GM10248 (cell line): ENCODE measurements at regions of chr2 and their contacts with region 1.

Region 1: DNA sequence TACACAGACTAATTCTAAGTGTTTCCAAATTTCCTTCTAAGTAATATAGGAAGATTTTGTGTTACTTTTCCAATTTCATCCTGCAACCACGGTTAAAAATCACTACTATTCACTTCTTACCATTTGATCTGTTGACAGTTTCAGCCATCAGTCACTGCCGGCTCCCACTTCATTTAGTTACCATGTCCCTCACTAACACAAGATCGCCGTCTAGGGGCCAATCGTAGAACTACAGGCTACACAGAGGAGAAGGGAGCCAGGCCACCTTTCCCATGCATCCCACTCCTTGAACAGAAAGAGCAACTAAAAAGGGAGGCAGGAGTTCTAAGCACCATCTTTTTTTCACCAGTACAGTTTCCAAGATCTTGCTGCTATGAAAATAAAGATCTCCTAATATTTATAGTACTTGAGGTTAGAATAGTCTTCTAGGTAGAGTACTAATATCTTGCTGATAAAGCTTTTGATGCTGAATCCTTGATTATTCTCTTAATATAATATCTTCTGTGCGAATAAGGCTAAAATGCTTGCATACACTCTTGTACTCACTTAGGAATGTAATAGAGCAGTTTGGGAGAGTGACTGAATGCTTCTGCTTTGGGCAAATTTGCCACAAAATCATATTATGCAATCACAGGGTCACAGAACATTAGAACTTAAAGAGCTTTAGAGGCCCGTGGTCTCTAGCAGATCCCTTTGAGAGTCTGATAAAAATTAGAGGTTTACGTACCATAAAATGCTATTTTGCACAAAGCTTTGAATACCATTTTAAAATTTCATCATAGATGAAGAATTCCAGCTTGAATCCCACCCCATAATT is 39.5 kb upstream of the CYP1B1 start:
- DNase-seq: peak; percentile 72
- CTCF ChIP-seq: peak; percentile 88

Region 2: DNA sequence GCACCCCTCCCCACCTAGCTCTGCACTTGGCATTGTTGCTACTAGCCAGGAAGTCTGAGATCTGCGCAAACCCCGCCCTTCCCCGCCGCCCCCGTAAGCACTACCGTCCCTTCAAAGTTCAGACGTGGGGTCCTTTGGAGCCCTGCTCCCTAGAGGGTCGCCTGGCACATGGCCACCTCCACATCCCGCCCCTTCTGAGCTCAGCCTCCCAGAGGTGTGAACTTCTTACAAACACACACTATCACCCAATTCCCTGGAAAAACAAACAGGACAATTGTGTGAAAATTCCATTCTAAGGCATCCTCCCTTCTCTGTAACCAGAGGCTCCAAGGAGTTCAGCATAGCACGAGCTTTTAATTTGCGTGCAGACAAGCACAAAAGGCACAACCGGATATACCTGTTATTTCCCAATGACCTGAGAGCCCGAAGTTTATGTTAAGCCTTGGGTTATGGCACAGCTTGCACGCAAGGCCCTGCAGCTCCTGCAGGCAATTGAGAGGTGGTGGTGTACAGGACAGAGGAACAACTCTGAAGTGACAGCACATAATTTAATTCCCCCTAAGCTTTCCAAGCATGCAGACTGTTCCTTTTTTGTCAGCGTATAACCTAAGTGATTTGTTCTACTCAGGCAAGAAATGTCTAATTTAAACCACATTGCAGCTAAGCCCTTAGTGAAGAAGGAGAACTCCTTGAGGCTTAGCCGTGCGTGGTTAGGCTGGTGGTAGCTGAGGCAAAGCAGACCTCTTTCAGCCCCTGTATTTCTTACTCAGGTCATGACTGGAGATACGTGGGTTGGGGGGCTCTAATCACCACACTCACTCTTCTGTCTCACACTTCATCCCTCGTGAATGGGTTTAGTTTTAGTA is 19.2 kb before region 1 on chr2:
- CTCF ChIA-PET with region 1: interaction called, 12 read pairs
- POLR2A ChIA-PET with region 1: no interaction called
- DNase-seq: peak; percentile 45
- CTCF ChIP-seq: no peak

Region 3: GRCh38 chr2:38128653-38129052 is 13.2 kb after region 1 on chr2:
- CTCF ChIA-PET with region 1: interaction called, 18 read pairs
- POLR2A ChIA-PET with region 1: no interaction called
- DNase-seq: peak; percentile 46
- CTCF ChIP-seq: no peak

Region 4: DNA sequence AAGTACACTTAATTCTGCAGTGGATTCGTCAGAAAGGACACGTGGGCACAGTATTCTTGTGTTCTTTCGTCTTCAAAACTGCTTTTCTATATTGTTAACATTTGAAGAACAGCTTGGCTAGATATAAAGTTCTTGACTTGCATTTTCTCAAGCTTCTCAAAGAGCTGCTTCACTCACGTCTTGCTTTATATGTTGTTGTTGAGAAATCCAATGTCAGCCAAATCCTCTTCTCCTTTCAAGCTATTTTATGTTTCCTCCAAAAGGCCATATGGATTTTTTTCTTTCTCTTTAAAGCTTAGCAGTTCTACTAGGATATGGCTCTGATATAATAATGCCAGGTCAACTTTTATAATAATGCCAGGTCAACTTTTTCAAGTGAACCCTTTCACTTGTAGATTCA is 26.1 kb after region 1 on chr2:
- CTCF ChIA-PET with region 1: interaction called, 10 read pairs
- POLR2A ChIA-PET with region 1: no interaction called
- DNase-seq: no peak
- CTCF ChIP-seq: no peak

Region 5: DNA sequence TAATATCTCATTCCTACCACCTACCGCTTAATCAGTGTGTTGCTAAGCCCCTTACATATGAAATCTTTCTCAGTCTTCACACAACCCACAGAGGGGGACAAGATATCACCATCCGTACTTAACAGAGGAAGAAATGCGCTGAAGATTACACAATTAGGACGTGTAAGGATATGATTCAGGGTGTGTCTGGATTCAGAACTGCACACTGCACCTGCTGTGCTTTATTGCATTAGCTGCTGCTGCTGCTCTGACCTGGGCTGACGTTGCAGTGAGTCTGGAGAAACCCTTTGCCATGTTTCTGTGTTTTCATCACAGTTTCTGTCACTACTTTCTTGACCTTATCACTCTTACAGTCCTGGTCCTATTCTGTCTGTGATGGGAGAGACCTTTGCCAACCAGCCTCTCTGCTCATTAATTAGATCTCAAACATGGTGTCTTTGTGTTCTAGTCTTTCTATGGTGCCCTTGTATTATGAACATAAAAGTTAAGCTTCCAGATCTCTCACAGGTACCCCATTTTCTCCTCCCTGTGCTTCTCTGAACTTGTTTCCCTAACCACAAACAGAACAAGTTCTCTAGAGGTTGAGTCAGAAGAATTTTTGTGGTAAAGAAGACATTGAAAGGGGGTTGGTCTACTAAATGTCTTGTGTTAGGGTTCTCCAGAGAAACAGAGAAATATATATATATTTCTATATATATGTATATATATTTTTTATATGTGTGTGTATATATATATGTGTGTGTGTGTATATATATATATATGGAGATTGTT is 53.5 kb after region 1 on chr2:
- CTCF ChIA-PET with region 1: interaction called, 14 read pairs
- POLR2A ChIA-PET with region 1: no interaction called
- DNase-seq: no peak
- CTCF ChIP-seq: no peak